ENCODE measurements at regions of chr10 and their contacts with region 1.

Region 1: DNA sequence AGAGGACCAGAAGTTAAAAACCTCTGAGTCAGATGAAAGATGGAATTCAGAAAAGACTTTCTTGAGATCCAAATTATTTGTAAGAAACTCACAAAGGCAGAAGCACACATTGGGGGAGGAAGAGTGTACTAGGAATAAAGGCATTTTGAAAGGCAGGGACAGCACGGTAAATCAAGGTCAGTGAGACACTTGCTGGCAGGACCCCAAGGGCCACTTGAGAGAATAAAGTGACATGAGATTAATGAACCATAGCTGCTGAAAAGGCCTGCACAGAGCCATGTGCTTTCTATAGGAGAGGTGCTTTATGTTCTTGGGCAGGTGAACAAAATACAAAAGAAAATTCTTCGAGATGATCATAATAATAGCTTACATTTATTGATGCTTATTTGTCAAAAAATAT is 929.9 kb upstream of the MBL2 start:
- DNase-seq: no peak
- H3K4me3 ChIP-seq: no peak overlapping the region
- CTCF ChIP-seq: no peak
- POLR2A ChIP-seq: no peak

Region 2: DNA sequence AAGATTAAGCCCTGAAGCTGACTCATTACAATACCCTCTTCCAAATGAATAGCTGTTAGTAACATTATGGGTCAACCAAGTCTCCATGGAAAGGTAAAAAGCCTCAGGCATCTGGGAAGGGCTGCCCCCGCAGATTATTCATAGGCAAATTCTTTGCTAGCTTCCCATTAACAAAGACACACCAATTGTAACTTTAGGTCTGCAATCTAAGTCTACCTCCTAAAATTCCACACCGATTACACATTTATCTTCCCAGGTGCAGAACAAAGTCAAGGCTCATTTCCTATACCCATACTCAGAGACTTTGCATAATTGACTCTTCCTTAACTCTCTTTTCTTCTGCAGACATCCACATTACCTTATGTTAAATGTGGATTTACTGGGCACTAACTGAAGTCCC is 103.6 kb before region 1 on chr10:
- intact Hi-C with region 1: no loop called
- DNase-seq: no peak
- H3K4me3 ChIP-seq: no peak overlapping the region
- CTCF ChIP-seq: no peak
- POLR2A ChIP-seq: no peak

Region 3: GRCh38 chr10:54125098-54125747 is 422.7 kb after region 1 on chr10:
- intact Hi-C with region 1: loop called (anchors 5 kb)
- DNase-seq: no peak
- H3K4me3 ChIP-seq: no peak overlapping the region
- CTCF ChIP-seq: no peak
- POLR2A ChIP-seq: no peak